ENCODE measurements at regions of chrX and their contacts with region 1.

Region 1: DNA sequence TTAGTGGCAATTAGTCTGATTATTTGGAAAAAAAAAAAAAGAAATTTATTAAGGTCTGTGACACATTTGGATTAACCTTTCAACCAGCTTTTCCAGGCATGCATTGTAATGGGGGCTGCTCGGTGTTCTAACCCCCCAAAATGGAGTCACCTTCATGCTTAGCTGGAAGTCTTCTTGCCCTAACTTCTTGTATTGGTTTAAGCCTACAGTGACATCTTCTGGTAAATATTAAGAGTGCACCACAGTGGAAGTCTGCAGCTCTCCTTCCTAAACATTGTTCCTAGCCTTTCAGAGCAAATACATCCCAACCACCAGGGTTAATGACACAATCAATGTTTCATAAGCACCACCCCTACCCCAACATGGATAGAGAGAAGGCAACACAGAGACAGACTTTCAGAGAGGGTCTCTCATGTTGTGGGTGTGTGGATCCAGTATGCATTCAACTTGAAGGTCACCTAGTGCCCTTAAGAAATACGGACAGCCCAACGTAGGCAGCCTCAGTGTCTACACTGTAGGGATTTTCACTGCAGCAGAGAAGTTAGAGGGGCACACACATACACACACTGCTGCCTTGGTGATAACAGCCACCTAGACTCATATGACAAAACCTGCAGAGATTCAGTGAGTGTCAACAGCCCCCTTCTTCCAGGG is 142.9 kb upstream of the MBNL3 start:
- DNase-seq: peak; percentile 21
- CTCF ChIP-seq: peak; percentile 65

Region 2: DNA sequence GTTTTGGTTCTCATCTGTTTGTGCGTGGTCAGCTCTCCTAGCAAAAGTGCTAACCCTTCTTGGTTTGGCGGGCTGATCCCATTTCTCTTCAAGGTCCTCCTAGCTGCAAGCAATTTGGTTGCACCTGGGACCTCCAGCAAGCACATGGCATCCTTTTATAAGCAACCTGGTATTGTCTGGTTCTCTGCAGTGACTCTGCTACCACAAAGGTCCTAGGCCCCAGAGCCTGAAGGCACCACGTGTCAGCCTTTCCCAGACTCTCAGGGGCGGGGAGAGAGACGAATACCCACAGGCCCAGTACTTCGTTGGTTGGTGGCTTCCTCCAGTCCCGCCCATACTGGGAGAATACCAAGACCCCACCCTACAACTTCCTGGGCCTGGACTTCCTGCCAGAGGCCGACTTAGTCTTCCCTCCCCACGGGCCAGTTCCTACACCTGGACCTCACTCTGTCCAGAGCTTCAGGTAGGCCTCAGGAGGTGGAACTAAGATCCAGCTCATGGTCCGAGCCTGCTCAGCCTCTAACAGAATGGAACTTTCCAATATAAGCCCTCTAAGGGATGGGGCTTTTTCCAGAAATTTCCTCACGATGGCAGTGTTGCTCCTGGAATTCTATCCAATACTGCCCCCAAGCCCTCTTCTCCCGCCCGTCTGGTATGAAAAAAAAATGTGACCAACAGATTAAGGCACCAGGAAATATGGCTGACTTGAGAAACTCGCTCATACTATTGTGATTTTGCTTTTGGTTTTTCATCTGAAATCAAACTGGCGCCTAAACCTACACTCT is 801.1 kb before region 1 on chrX:
- in situ Hi-C with region 1: loop called (anchors 25 kb)
- DNase-seq: no peak
- CTCF ChIP-seq: peak; percentile 25